WTC11 (cell line): ENCODE measurements at regions of chr11 and their contacts with region 1.

Region 1: DNA sequence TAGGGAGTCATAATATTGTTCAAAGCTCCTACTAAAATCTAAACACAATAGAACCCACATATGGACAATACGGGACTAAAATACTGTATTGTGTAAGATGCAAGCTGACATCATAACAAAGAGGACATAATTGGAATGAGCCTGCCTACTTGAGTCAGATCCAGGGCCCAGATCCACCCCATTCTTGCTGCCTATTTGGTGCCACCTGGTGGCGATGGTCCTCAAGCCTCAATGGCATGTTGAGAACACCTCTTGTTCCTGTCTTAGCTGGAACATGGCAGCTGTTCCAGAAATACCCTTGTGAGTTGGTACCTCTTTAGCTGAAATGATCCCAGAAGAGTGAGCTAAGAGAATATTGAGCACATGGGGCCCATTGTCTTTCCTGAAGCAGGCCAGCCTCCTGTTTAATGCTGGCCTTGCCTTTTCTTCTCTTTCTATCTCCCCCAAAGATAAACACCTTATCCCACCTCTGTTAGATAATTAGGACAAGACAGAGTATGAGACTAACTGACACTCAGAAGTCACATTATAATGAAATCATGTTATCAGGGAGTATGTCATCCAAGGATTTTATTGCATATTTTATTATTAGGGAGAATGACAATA is 680.9 kb upstream of the ANO5 start:
- DNase-seq: peak; percentile 88
- ATAC-seq: peak; percentile 99
- H3K4me3 Mint-ChIP-seq: no peak overlapping the region
- H3K27ac Mint-ChIP-seq: no peak overlapping the region
- H3K4me1 Mint-ChIP-seq: no peaks in the 10 kb centered on the region
- H3K27me3 Mint-ChIP-seq: no peaks in the 10 kb centered on the region
- CTCF ChIP-seq: peak; percentile 55; the same call in 1 of the 2 replicates

Region 2: GRCh38 chr11:21142007-21142406 is 369.9 kb before region 1 on chr11:
- CTCF ChIA-PET with region 1: interaction called, 20 read pairs
- POLR2A ChIA-PET with region 1: no interaction called
- DNase-seq: peak; percentile 30
- ATAC-seq: peak; percentile 78
- H3K4me3 Mint-ChIP-seq: no peak overlapping the region
- H3K27ac Mint-ChIP-seq: no peak overlapping the region
- H3K4me1 Mint-ChIP-seq: peaks cover 15% of the 10 kb centered on the region
- H3K27me3 Mint-ChIP-seq: no peaks in the 10 kb centered on the region; the same call in 1 of the 2 replicates
- CTCF ChIP-seq: no peak

Region 3: DNA sequence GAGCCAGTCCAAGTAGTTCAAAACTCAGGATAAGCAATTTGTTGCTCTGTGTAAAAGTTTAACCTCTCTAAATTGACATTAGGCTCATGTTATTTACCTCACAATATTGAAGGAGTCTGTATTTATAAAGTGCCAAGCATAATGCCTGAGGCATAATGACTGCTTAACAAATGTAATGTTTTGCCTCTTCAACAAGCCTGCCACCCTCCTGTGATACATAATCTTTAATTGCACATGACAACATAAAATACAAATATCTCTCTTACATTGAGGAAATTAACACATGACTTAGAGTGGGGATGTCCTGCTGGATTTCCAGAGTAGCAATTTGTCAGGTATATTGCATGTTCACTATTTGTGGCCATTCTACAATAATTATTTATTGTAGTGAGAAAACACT is 211.7 kb after region 1 on chr11:
- CTCF ChIA-PET with region 1: no interaction called
- POLR2A ChIA-PET with region 1: no interaction called
- DNase-seq: no peak
- ATAC-seq: no peak
- H3K4me3 Mint-ChIP-seq: no peak overlapping the region
- H3K27ac Mint-ChIP-seq: no peak overlapping the region
- H3K4me1 Mint-ChIP-seq: peaks cover 3% of the 10 kb centered on the region
- H3K27me3 Mint-ChIP-seq: no peaks in the 10 kb centered on the region
- CTCF ChIP-seq: no peak